GM12878 (cell line): ENCODE measurements at regions of chr9 and their contacts with region 1.

Region 1: DNA sequence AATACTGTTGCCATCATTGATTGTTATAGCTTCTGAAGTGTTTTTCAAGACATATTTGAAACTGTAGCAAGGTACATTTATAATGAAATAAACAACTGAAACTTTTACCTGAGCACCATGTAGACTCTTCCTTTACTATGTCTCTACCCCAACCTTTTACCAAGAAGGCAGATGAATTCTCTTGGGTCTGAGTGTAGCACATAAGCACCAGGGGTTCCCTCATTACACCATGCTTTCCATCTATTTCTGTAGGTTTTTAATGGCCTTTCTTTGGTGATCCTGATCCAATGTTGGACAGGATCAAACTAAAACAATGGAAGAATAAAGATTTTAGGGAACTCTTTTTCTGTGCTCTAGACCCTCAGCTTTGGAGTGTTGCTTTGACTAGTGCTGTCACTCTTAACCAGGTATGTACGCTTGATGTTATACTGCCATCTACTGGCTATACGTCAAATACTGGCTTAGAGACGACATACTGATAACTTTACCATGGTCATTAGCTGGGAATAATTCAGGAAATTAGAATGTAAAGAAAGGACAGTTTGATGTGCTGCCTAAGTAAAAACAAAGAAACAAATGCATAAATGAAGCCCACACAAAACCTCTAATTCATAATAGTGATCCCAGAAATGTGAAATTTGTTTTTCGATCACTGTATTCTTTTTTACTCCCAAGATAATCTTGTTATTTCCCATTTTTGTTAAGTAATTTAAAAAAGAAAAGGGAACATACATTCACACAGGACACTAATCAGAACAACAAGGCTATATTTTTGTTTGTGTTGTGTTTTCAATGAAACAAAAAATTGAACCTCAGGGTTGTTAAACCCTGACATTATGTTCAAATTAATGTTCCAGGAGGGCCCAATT is 30.7 kb downstream of the IFNW1 start:
- DNase-seq: peak; percentile 44
- ATAC-seq: peak; percentile 99
- H3K4me3 ChIP-seq: no peak overlapping the region
- H3K27ac ChIP-seq: no peak overlapping the region
- H3K4me1 ChIP-seq: no peaks in the 10 kb centered on the region
- H3K27me3 ChIP-seq: no peaks in the 10 kb centered on the region
- CTCF ChIP-seq: peak; percentile 77 to 87 (median 78)
- EP300 ChIP-seq: no peak
- POLR2A ChIP-seq: no peak
- RAD21 ChIP-seq: peak; percentile 97

Region 2: DNA sequence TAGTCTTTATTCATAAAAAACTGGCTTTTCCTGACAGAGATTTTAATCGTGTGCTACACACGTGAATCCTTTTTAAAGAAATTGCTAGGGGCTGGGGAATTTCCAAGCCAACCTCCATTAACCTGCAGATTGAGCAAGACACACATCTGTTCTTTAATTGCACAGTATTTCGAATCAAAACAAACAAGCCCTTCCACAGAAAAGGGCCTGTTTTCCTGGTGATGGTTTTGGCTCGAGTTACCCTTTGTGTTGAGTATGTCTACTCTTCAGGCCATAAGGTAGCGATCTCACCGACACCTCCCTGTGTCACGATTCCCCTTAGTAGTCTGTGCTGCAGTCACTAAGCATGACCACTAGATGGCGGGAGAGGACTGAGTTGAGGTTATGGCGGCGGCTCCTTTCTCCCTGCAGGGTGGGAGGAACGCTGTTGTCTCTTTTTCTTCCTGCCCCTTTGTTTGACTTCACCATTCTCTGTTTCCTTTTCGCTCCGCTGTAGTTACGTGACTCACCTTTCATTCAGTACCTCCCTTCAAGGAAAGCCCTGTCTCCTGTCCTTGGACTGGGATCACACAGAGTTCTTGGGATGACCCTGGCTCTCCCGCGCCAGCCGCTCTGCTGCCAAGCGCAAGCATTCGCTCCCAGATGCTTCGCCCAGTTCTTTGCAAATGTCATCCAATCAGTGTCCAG is 1185.0 kb before region 1 on chr9:
- CTCF ChIA-PET with region 1: interaction called, 34 read pairs
- POLR2A ChIA-PET with region 1: no interaction called
- RAD21 ChIA-PET with region 1: interaction called, 14 read pairs
- SMC1A ChIA-PET with region 1: interaction called, 6 read pairs
- in situ Hi-C with region 1: loop called (anchors 5 kb)
- intact Hi-C with region 1: loop called (anchors 2 kb)
- DNase-seq: peak; percentile 48
- ATAC-seq: peak; percentile 98
- H3K4me3 ChIP-seq: peak overlapping the region; percentile 56; the same call in 1 of the 2 replicates
- H3K27ac ChIP-seq: no peak overlapping the region
- H3K4me1 ChIP-seq: no peaks in the 10 kb centered on the region; the same call in 1 of the 2 replicates
- H3K27me3 ChIP-seq: no peaks in the 10 kb centered on the region; a peak in 2 of 4 replicates
- CTCF ChIP-seq: peak; percentile 94 to 97 (median 96)
- EP300 ChIP-seq: no peak
- POLR2A ChIP-seq: no peak
- RAD21 ChIP-seq: peak; percentile 98

Region 3: GRCh38 chr9:20356403-20357035 is 754.4 kb before region 1 on chr9:
- CTCF ChIA-PET with region 1: interaction called, 11 read pairs
- POLR2A ChIA-PET with region 1: no interaction called
- RAD21 ChIA-PET with region 1: interaction called, 4 read pairs
- SMC1A ChIA-PET with region 1: interaction called, 8 read pairs
- in situ Hi-C with region 1: loop called (anchors 25 kb)
- intact Hi-C with region 1: loop called (anchors 1 kb)
- DNase-seq: peak; percentile 36
- ATAC-seq: peak; percentile 39
- H3K4me3 ChIP-seq: no peak overlapping the region
- H3K27ac ChIP-seq: no peak overlapping the region
- H3K4me1 ChIP-seq: peaks cover 29% of the 10 kb centered on the region
- H3K27me3 ChIP-seq: no peaks in the 10 kb centered on the region
- CTCF ChIP-seq: peak; percentile 62 to 80 (median 68)
- EP300 ChIP-seq: no peak
- POLR2A ChIP-seq: no peak
- RAD21 ChIP-seq: peak; percentile 97

Region 4: DNA sequence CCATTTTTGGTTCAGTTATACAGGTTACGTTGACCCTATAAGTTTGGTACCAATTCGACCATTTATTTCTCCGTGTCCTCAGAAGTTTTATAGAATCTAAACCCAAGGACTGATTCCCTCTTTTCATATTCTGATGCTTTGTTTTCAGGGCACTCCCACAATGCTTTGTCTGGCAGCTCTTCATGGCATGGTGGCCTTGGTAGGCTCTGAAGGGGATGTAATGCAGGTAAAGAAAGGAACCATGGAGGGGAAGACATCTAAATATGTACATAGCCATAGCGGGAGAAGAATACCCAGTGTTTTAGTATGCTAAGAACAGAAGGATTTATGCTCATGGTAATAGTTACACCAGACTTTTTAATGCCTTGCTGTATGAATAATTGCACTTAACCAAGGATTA is 162.2 kb before region 1 on chr9:
- CTCF ChIA-PET with region 1: interaction called, 47 read pairs
- POLR2A ChIA-PET with region 1: no interaction called
- RAD21 ChIA-PET with region 1: interaction called, 6 read pairs
- SMC1A ChIA-PET with region 1: interaction called, 4 read pairs
- in situ Hi-C with region 1: no loop called
- intact Hi-C with region 1: loop called (anchors 5 kb)
- DNase-seq: no peak
- ATAC-seq: no peak
- H3K4me3 ChIP-seq: no peak overlapping the region
- H3K27ac ChIP-seq: no peak overlapping the region
- H3K4me1 ChIP-seq: no peaks in the 10 kb centered on the region
- H3K27me3 ChIP-seq: no peaks in the 10 kb centered on the region
- CTCF ChIP-seq: no peak
- EP300 ChIP-seq: no peak
- POLR2A ChIP-seq: no peak
- RAD21 ChIP-seq: no peak

Region 5: GRCh38 chr9:20997503-20998076 is 113.4 kb before region 1 on chr9:
- CTCF ChIA-PET with region 1: interaction called, 16 read pairs
- POLR2A ChIA-PET with region 1: no interaction called
- RAD21 ChIA-PET with region 1: no interaction called
- SMC1A ChIA-PET with region 1: interaction called, 4 read pairs
- in situ Hi-C with region 1: no loop called
- intact Hi-C with region 1: no loop called
- DNase-seq: peak; percentile 47
- ATAC-seq: peak; percentile 85
- H3K4me3 ChIP-seq: no peak overlapping the region
- H3K27ac ChIP-seq: peak overlapping the region; percentile 57
- H3K4me1 ChIP-seq: peaks cover 18% of the 10 kb centered on the region
- H3K27me3 ChIP-seq: no peaks in the 10 kb centered on the region
- CTCF ChIP-seq: no peak
- EP300 ChIP-seq: no peak
- POLR2A ChIP-seq: no peak
- RAD21 ChIP-seq: no peak

Region 6: DNA sequence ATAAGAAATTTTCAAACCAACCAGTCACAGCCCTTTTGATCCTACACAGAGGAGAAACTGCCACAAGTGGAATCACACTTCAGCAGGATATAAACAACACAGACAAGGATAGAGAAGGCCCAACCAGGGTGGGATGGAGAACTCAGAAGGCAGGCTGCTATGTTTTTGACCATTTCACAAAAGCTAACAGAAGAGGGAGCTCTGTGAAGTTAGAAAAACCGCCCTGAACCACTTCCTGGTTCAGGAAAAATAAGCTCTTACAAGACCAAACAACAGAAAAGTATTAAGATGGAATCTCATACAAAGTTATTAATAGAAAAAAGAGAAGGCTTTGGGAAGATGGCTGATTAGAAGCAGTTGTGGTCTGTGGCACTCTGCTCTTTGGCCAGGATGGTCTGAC is 32.2 kb before region 1 on chr9:
- CTCF ChIA-PET with region 1: interaction called, 57 read pairs
- POLR2A ChIA-PET with region 1: no interaction called
- RAD21 ChIA-PET with region 1: interaction called, 22 read pairs
- SMC1A ChIA-PET with region 1: interaction called, 17 read pairs
- in situ Hi-C with region 1: no loop called
- intact Hi-C with region 1: no loop called
- DNase-seq: no peak
- ATAC-seq: peak; percentile 79
- H3K4me3 ChIP-seq: no peak overlapping the region
- H3K27ac ChIP-seq: no peak overlapping the region
- H3K4me1 ChIP-seq: peaks cover 6% of the 10 kb centered on the region; the same call in 1 of the 2 replicates
- H3K27me3 ChIP-seq: no peaks in the 10 kb centered on the region
- CTCF ChIP-seq: 0 out of 6 replicates have a peak, but pooled peaks have one; percentile 3 to 15 (median 13)
- EP300 ChIP-seq: no peak
- POLR2A ChIP-seq: no peak
- RAD21 ChIP-seq: no peak

Region 7: GRCh38 chr9:21137020-21137419 is 26.1 kb after region 1 on chr9:
- CTCF ChIA-PET with region 1: no interaction called
- POLR2A ChIA-PET with region 1: no interaction called
- RAD21 ChIA-PET with region 1: no interaction called
- SMC1A ChIA-PET with region 1: no interaction called
- in situ Hi-C with region 1: no loop called
- intact Hi-C with region 1: no loop called
- DNase-seq: no peak
- ATAC-seq: no peak
- H3K4me3 ChIP-seq: no peak overlapping the region
- H3K27ac ChIP-seq: no peak overlapping the region
- H3K4me1 ChIP-seq: peaks cover 6% of the 10 kb centered on the region
- H3K27me3 ChIP-seq: no peaks in the 10 kb centered on the region
- CTCF ChIP-seq: no peak
- EP300 ChIP-seq: no peak
- POLR2A ChIP-seq: no peak
- RAD21 ChIP-seq: no peak